ENCODE measurements at regions of chr17 and their contacts with region 1.

Region 1: DNA sequence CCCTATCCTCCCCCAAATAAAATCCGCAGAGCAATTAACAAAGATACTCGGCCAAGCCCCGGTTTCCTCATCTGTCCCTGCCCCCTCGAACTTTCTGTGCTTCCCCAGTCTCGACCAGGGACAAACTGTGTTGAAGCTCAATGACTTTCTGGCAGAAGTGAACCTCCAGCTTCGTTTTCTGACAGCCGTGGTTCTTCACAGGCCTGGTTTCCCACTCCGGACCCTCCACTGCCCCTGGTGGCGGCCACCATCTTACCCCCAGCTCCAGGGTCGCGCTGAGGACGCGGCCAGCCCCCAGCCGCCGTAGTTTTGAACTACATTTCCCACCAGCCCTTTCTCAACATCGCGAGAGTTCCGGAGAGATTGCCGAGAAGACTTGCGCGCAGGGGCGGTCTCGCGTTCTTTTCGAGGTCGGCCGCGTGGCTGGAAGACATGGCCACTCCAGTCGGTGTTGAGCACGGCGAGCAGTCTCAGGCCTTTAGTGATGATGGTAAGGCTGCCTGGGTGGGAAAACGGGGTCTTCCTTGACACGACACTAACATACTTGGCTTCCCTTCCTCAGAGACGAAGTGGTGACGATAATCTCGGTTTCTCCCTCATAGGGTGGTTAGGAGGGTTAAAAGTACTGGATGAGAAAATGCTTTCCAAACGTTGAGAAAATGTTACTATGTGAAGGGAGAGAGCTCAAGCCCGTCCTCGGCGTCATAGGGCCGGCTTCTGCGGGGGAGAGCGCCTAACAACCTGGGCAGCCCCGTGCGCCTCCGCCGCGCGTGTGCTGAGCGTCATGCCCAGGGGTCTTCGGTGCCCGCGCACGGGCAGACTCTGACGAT is 17.7 kb downstream of the PRCD start:
- DNase-seq: peak; percentile 94 to 95 (median 94)
- H3K4me3 ChIP-seq: peak overlapping the region; percentile 87 to 99
- H3K4me3 Mint-ChIP-seq: peak overlapping the region; percentile 94 to 99 (median 98)
- H3K27ac ChIP-seq: peak overlapping the region; percentile 94
- H3K27ac Mint-ChIP-seq: peak overlapping the region; percentile 99 to 100 (median 99)
- H3K4me1 ChIP-seq: peaks cover 60% of the 10 kb centered on the region
- H3K4me1 Mint-ChIP-seq: peaks cover 35 to 74% (median 50%) of the 10 kb centered on the region in 4 donors
- H3K27me3 ChIP-seq: no peaks in the 10 kb centered on the region
- H3K27me3 Mint-ChIP-seq: no peaks in the 10 kb centered on the region

Region 2: DNA sequence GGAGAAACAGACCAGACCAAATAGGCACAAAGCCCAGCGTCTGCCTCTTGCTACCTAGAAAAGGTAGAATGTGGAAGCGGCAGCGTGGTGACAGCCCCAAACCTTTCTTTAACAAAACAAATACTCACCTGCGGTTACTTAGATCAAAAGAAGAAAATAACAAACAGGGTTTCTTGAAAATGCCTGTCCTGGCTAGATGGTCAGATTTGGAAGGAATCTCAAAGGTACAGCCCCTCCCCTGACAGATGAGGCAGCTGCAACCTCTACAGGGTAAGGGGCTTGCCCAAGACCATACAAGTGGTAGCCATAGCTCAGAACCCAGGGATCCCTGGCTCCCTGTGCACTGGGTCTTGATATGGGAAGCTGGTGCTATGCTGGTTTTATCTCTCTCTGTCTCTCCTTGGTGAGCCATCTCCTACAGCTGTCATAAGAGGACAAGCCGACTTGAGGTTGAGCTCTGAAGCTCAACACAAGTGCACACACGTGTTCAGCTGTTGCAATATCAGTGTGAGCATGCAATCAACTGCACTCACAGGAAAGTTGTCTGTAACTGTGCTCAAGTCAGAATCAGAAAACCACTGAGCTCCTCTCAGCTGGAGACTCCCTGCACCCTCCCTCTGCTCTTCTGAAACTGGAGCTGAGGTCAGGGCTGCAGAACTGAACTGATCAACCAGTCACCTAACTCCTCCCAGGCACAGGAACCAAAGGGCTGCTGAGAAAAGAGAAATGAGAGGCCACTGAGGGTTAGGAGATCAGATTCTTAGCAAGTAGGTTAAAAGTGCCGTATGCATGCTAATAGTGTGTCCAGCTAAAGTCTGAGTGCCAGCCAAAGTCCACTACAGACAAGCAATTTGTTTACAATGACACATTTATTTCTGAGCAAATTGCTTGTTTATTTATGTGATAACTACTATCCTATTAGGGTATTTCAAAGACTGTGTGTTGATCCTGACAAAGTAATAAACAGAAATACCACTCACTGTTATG is 311.2 kb before region 1 on chr17:
- CTCF ChIA-PET with region 1: no interaction called
- POLR2A ChIA-PET with region 1: no interaction called
- intact Hi-C with region 1: no loop called
- DNase-seq: peak; percentile 47 to 61 (median 58)
- H3K4me3 ChIP-seq: peak overlapping the region in 1 of 2 donors; percentile 11
- H3K4me3 Mint-ChIP-seq: peak overlapping the region in 7 of 8 donors; percentile 59 to 85 (median 83)
- H3K27ac ChIP-seq: peak overlapping the region; percentile 25
- H3K27ac Mint-ChIP-seq: peak overlapping the region; percentile 71 to 94 (median 91)
- H3K4me1 ChIP-seq: peaks cover 67% of the 10 kb centered on the region
- H3K4me1 Mint-ChIP-seq: peaks cover 18 to 81% (median 50%) of the 10 kb centered on the region in 4 donors
- H3K27me3 ChIP-seq: no peaks in the 10 kb centered on the region
- H3K27me3 Mint-ChIP-seq: no peaks in the 10 kb centered on the region

Region 3: DNA sequence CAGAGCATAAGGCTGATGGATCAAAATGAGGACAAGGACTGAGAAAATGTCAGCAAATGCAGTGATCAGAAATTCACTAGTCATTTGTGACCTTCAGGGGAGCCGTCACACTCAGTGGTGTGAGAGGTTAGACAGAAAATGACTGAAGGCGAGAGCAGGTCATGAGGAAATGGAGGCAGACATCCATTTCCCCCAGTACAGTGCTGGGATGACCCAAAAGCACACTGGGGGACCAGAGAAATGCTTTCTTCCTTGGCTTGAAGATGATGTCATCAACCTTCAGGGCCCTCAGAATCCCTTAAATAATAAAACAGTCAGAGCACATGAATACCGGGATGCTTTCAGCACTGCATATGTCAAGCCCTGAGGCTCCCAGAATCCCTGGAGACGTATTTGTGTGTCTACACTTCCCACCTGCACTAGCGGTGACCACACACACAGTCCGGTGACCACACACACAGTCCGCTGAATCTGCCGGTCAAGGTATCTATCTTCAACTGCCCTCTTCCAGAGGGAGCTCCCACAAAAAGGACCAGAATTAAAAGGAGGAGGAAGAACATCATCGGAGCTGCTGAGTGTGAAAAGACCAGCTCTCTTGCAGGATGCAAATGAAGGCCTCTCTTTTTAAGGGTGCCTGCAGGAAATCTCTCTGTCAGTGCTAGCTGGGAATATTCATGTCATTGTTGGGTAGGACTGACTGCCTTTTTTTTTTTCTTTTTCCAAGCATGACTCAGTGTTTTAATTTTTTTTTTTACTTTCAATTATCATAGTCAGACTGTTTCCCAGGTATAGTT is 112.9 kb before region 1 on chr17:
- CTCF ChIA-PET with region 1: no interaction called
- POLR2A ChIA-PET with region 1: no interaction called
- intact Hi-C with region 1: no loop called
- DNase-seq: no peak
- H3K4me3 ChIP-seq: no peak overlapping the region
- H3K4me3 Mint-ChIP-seq: no peak overlapping the region
- H3K27ac ChIP-seq: no peak overlapping the region
- H3K27ac Mint-ChIP-seq: no peak overlapping the region
- H3K4me1 ChIP-seq: peaks cover 16% of the 10 kb centered on the region
- H3K4me1 Mint-ChIP-seq: peaks cover 28 to 79% (median 54%) of the 10 kb centered on the region in 4 donors
- H3K27me3 ChIP-seq: no peaks in the 10 kb centered on the region
- H3K27me3 Mint-ChIP-seq: no peaks in the 10 kb centered on the region

Region 4: GRCh38 chr17:76506408-76507349 is 50.9 kb before region 1 on chr17:
- CTCF ChIA-PET with region 1: interaction called, 7 read pairs
- POLR2A ChIA-PET with region 1: interaction called, 10 read pairs
- intact Hi-C with region 1: no loop called
- DNase-seq: peak; percentile 83 to 91 (median 86)
- H3K4me3 ChIP-seq: no peak overlapping the region
- H3K4me3 Mint-ChIP-seq: peak overlapping the region in 2 of 8 donors; percentile 15 to 39
- H3K27ac ChIP-seq: no peak overlapping the region
- H3K27ac Mint-ChIP-seq: peak overlapping the region in 6 of 7 donors; percentile 13 to 90 (median 57)
- H3K4me1 ChIP-seq: peaks cover 26% of the 10 kb centered on the region
- H3K4me1 Mint-ChIP-seq: peaks cover 5 to 31% (median 23%) of the 10 kb centered on the region in 4 donors
- H3K27me3 ChIP-seq: no peaks in the 10 kb centered on the region
- H3K27me3 Mint-ChIP-seq: no peaks in the 10 kb centered on the region

Region 5: DNA sequence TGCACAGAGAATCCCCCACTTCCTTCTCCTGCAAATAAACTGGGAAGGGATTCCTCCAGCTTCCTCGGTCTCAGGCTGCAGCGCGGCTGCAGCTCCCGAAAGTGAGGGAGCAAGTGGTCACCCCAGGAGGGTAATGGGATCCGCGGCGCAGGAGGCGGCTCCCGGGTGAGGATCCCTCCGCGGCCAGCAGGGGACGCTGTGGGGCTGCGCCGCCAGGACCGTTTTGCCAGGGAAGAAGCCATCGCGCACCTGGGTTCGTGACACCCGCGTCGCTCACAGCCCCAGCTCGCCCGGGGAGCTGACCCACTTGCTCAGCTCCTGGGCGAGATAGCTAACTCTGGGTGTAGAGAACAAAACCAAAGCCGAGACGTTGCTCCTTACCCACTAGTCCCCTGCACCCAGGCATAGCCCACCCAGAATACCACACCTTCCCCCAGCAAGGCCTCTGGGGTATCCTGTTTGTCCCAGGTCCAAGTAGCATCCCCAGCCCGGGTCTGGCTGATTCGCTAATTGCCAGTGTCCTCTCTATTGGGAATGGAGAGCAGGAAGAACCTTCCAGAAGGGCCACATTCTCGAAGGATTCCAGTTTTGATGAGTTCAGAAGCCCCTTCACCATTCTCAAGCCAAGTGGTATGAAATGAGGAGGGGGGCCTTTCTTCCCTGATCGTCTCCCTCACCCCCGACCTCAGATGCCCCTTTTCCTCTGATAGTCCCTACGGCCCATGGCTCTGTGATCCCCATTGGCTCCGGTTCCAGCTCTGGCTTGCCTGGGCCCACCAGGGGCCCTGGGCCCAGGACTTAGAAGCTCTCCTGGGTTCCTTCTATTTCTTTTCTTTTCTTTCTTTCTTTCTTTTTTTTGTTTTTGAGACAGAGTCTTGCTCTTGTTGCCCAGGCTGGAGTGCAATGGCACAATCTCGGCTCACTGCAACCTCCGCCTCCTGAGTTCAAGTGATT is 34.2 kb before region 1 on chr17:
- CTCF ChIA-PET with region 1: interaction called, 34 read pairs
- POLR2A ChIA-PET with region 1: interaction called, 10 read pairs
- intact Hi-C with region 1: no loop called
- DNase-seq: peak; percentile 67 to 84 (median 78)
- H3K4me3 ChIP-seq: no peak overlapping the region
- H3K4me3 Mint-ChIP-seq: peak overlapping the region in 6 of 8 donors; percentile 32 to 79 (median 64)
- H3K27ac ChIP-seq: no peak overlapping the region
- H3K27ac Mint-ChIP-seq: peak overlapping the region; percentile 58 to 97 (median 88)
- H3K4me1 ChIP-seq: peaks cover 27% of the 10 kb centered on the region
- H3K4me1 Mint-ChIP-seq: peaks cover 15 to 51% (median 27%) of the 10 kb centered on the region in 4 donors
- H3K27me3 ChIP-seq: no peaks in the 10 kb centered on the region
- H3K27me3 Mint-ChIP-seq: no peaks in the 10 kb centered on the region

Region 6: DNA sequence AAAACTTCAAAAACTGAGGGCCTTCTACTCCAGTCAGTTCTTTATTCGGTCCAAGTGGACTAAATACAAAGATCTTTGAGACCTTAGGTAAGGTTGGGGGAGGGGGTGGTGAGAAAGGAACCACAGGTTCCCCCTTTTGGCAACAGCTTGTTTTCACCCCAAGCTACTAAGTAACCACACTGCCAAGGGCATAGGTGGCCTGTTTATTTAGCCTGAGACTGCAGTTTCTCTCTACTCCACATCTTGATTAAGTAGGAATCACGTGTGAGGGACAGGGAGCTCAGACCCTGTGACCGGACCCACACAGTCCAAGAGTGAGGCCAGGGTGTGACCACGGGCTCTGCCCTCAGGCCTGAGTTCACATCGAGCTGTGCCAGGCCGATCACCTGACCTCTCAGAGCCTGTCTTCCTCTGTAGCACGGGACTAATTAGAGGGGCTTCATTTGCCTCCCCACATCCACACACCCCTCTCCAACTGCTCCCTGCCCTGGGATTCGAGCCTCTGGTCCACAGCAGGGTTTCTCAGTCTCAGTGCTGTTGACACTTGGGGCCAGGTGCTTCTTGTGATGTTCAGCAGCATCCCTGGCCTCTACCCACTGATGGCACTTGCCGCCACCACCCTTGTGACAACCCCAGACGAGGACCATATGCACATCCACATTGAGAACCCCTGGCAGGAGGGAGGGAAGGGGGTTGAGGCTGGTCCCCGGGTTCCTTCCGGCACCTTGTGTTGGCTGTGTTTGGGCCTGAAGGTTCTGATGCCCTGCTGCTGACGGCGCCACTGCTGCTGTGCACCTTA is 10.2 kb after region 1 on chr17:
- CTCF ChIA-PET with region 1: interaction called, 7 read pairs
- POLR2A ChIA-PET with region 1: interaction called, 23 read pairs
- intact Hi-C with region 1: no loop called
- DNase-seq: no peak
- H3K4me3 ChIP-seq: no peak overlapping the region
- H3K4me3 Mint-ChIP-seq: peak overlapping the region in 1 of 8 donors; percentile 23
- H3K27ac ChIP-seq: no peak overlapping the region
- H3K27ac Mint-ChIP-seq: peak overlapping the region; percentile 24 to 88 (median 60)
- H3K4me1 ChIP-seq: peaks cover 3% of the 10 kb centered on the region
- H3K4me1 Mint-ChIP-seq: peaks cover 24 to 47% (median 32%) of the 10 kb centered on the region in 4 donors
- H3K27me3 ChIP-seq: no peaks in the 10 kb centered on the region
- H3K27me3 Mint-ChIP-seq: no peaks in the 10 kb centered on the region

Region 7: DNA sequence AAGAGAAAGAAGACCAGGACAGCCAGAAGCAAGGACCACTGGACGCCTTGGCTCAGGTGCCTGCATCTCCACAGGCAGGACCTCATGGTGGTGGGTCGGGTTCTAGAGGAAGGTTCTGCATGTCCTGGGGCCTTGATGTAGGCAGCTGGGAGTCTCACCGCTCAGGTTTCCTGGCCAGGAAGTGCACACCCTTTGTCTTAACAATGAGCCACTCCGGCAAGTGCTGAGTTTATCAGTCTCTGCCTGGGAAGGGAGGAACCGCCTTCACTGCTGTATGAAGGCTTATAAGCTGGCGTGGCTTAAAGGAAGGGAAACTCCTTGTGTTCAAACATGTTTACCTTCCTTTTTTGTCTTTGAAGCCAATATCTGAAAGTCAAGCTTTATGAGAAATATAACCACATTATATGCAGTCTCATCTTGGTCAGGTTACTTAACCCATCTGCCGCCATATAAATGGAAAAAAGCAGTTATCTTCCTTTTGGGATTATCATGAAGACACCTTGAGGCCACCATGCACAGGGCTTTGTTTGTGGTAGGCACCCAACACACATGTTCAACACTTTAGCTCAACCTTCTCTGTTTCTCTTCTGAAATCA is 86.1 kb after region 1 on chr17 and contains the start of gene ST6GALNAC1:
- CTCF ChIA-PET with region 1: no interaction called
- POLR2A ChIA-PET with region 1: interaction called, 10 read pairs
- intact Hi-C with region 1: no loop called
- DNase-seq: peak; percentile 28 to 66 (median 55)
- H3K4me3 ChIP-seq: peak within 1 kb of the TSS; percentile 36 to 59
- H3K4me3 Mint-ChIP-seq: peak within 1 kb of the TSS; percentile 81 to 96 (median 88)
- H3K27ac ChIP-seq: peak within 1 kb of the TSS; percentile 33
- H3K27ac Mint-ChIP-seq: peak within 1 kb of the TSS; percentile 67 to 91 (median 84)
- H3K4me1 ChIP-seq: peaks cover 36% of the 10 kb centered on the region
- H3K4me1 Mint-ChIP-seq: peaks cover 16 to 37% (median 34%) of the 10 kb centered on the region in 4 donors
- H3K27me3 ChIP-seq: no peaks in the 10 kb centered on the region
- H3K27me3 Mint-ChIP-seq: no peaks in the 10 kb centered on the region
- total RNA-seq, gene ST6GALNAC1: 12.7 to 14.6 TPM

Region 8: GRCh38 chr17:76681222-76682137 is 123.9 kb after region 1 on chr17:
- CTCF ChIA-PET with region 1: interaction called, 77 read pairs
- POLR2A ChIA-PET with region 1: interaction called, 17 read pairs
- intact Hi-C with region 1: loop called (anchors 1 kb)
- DNase-seq: peak; percentile 67 to 75 (median 73)
- H3K4me3 ChIP-seq: no peak overlapping the region
- H3K4me3 Mint-ChIP-seq: peak overlapping the region in 4 of 8 donors; percentile 1 to 37 (median 19)
- H3K27ac ChIP-seq: no peak overlapping the region
- H3K27ac Mint-ChIP-seq: peak overlapping the region in 6 of 7 donors; percentile 30 to 90 (median 74)
- H3K4me1 ChIP-seq: peaks cover 46% of the 10 kb centered on the region
- H3K4me1 Mint-ChIP-seq: peaks cover 8 to 16% (median 14%) of the 10 kb centered on the region in 4 donors
- H3K27me3 ChIP-seq: no peaks in the 10 kb centered on the region
- H3K27me3 Mint-ChIP-seq: peaks cover 0 to 3% of the 10 kb centered on the region in 2 donors

Region 9: GRCh38 chr17:76695059-76695831 is 137.7 kb after region 1 on chr17:
- CTCF ChIA-PET with region 1: no interaction called
- POLR2A ChIA-PET with region 1: no interaction called
- intact Hi-C with region 1: no loop called
- DNase-seq: no peak
- H3K4me3 ChIP-seq: no peak overlapping the region
- H3K4me3 Mint-ChIP-seq: peak overlapping the region in 1 of 8 donors; percentile 31
- H3K27ac ChIP-seq: no peak overlapping the region
- H3K27ac Mint-ChIP-seq: peak overlapping the region in 2 of 7 donors; percentile 60 to 63
- H3K4me1 ChIP-seq: peaks cover 5% of the 10 kb centered on the region
- H3K4me1 Mint-ChIP-seq: peaks cover 0 to 29% (median 5%) of the 10 kb centered on the region in 4 donors
- H3K27me3 ChIP-seq: no peaks in the 10 kb centered on the region
- H3K27me3 Mint-ChIP-seq: no peaks in the 10 kb centered on the region

Region 10: DNA sequence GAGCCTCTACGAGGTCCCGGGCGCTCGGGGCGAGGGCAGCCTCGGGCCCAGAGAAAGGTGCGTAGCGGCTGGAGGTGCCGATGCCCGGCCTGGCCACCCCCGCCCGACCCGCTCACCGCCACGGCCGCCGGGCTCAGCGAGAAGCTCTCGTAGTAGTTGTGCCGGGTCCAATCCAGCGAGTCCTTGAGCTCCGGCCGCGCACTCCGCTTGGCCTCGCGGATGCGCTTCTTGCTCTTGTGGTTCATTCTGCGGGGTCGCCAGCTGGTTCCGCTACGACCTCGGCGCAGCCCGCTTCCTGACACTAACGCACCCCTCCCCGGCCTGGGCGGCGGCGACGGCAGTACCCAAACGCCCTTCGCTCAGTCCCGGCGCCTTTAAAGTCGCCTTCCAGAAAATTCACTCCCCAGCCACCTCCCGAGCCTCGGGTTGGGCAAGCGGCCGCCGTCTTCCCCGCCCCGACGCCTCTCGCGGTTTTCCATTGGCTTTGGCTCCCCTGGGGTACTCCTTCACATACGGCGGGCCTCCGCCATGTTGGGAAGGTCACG is 168.7 kb after region 1 on chr17 and contains the start of gene JMJD6:
- CTCF ChIA-PET with region 1: interaction called, 4 read pairs
- POLR2A ChIA-PET with region 1: interaction called, 19 read pairs
- intact Hi-C with region 1: loop called (anchors 5 kb)
- DNase-seq: peak in 1 of 5 donors; percentile 98
- H3K4me3 ChIP-seq: peak within 1 kb of the TSS; percentile 52 to 95
- H3K4me3 Mint-ChIP-seq: peak within 1 kb of the TSS; percentile 94 to 99 (median 97)
- H3K27ac ChIP-seq: peak within 1 kb of the TSS; percentile 97
- H3K27ac Mint-ChIP-seq: peak within 1 kb of the TSS; percentile 98 to 100 (median 99)
- H3K4me1 ChIP-seq: peaks cover 71% of the 10 kb centered on the region
- H3K4me1 Mint-ChIP-seq: peaks cover 24 to 76% (median 51%) of the 10 kb centered on the region in 4 donors
- H3K27me3 ChIP-seq: no peaks in the 10 kb centered on the region
- H3K27me3 Mint-ChIP-seq: no peaks in the 10 kb centered on the region
- total RNA-seq, gene JMJD6: 59.4 to 62.1 TPM